Caco-2 (cell line): ENCODE measurements at regions of chr12 and their contacts with region 1.

Region 1: GRCh38 chr12:4276524-4277204 is 3.1 kb downstream of the CCND2 start:
- DNase-seq: peak; percentile 94 to 95
- H3K4me3 ChIP-seq: no peak overlapping the region
- H3K4me3 Mint-ChIP-seq: peak overlapping the region; percentile 98
- H3K27ac Mint-ChIP-seq: peak overlapping the region; percentile 94
- H3K4me1 ChIP-seq: peaks cover 46% of the 10 kb centered on the region
- H3K4me1 Mint-ChIP-seq: peaks cover 52% of the 10 kb centered on the region
- H3K27me3 ChIP-seq: peaks cover 13% of the 10 kb centered on the region
- H3K27me3 Mint-ChIP-seq: peaks cover 24% of the 10 kb centered on the region
- CTCF ChIP-seq: peak; percentile 97 to 98

Region 2: DNA sequence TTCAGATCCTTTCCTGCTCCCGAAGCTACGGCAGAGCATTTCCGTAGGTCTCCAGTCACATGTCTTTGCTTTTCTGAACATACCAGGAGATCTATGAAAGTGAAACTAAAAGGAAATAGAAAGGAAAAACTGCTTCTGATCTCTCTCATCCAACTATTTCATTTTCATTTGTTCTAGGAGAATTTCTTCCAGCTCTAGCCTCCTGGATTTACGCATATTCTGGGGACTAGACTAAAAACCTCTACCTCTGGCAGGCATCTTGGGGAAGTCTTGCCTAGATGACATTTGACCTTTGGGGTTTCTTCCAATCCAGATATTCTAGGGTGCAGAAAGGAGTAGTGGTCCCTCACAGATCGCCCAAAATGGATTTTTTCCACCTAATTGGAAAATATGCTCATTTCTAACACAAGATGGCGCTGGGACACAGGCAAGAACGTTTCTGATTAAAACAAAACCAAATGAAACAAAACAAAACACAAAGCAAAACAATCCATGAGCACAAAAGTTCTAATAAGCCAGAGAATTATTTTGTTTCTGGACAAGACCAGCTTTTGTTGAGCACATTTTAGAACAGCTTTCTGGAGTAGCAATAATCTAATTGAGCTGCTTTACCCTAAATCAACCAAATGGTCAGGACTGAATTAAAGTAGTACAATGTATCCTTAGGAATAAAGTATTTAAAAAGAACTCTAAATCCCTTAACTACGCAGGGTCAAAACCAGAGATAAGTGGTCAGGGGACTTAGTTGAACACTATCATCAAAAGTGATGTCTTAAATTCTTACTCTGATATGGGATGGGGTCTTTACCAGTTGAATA is 391.2 kb before region 1 on chr12:
- CTCF ChIA-PET with region 1: interaction called, 93 read pairs
- POLR2A ChIA-PET with region 1: interaction called, 5 read pairs
- intact Hi-C with region 1: loop called (anchors 1 kb)
- DNase-seq: peak in 1 of 2 experiments; percentile 67
- H3K4me3 ChIP-seq: no peak overlapping the region
- H3K4me3 Mint-ChIP-seq: no peak overlapping the region
- H3K27ac Mint-ChIP-seq: no peak overlapping the region
- H3K4me1 ChIP-seq: 0 out of 2 replicates have a peak, but pooled peaks cover 3% of the 10 kb centered on the region
- H3K4me1 Mint-ChIP-seq: peaks cover 14% of the 10 kb centered on the region
- H3K27me3 ChIP-seq: no peaks in the 10 kb centered on the region
- H3K27me3 Mint-ChIP-seq: peaks cover 7% of the 10 kb centered on the region
- CTCF ChIP-seq: peak; percentile 90 to 98

Region 3: GRCh38 chr12:3935078-3935477 is 341.6 kb before region 1 on chr12:
- CTCF ChIA-PET with region 1: interaction called, 16 read pairs
- POLR2A ChIA-PET with region 1: no interaction called
- intact Hi-C with region 1: no loop called
- DNase-seq: no peak
- H3K4me3 ChIP-seq: no peak overlapping the region
- H3K4me3 Mint-ChIP-seq: no peak overlapping the region
- H3K27ac Mint-ChIP-seq: no peak overlapping the region
- H3K4me1 ChIP-seq: no peaks in the 10 kb centered on the region
- H3K4me1 Mint-ChIP-seq: no peaks in the 10 kb centered on the region
- H3K27me3 ChIP-seq: no peaks in the 10 kb centered on the region
- H3K27me3 Mint-ChIP-seq: peaks cover 5% of the 10 kb centered on the region
- CTCF ChIP-seq: no peak

Region 4: GRCh38 chr12:3998968-3999826 is 277.5 kb before region 1 on chr12:
- CTCF ChIA-PET with region 1: interaction called, 32 read pairs
- POLR2A ChIA-PET with region 1: interaction called, 6 read pairs
- intact Hi-C with region 1: loop called (anchors 1 kb)
- DNase-seq: peak; percentile 94
- H3K4me3 ChIP-seq: no peak overlapping the region
- H3K4me3 Mint-ChIP-seq: peak overlapping the region; percentile 19
- H3K27ac Mint-ChIP-seq: peak overlapping the region; percentile 98
- H3K4me1 ChIP-seq: peaks cover 31% of the 10 kb centered on the region
- H3K4me1 Mint-ChIP-seq: peaks cover 51% of the 10 kb centered on the region
- H3K27me3 ChIP-seq: no peaks in the 10 kb centered on the region
- H3K27me3 Mint-ChIP-seq: no peaks in the 10 kb centered on the region
- CTCF ChIP-seq: no peak

Region 5: DNA sequence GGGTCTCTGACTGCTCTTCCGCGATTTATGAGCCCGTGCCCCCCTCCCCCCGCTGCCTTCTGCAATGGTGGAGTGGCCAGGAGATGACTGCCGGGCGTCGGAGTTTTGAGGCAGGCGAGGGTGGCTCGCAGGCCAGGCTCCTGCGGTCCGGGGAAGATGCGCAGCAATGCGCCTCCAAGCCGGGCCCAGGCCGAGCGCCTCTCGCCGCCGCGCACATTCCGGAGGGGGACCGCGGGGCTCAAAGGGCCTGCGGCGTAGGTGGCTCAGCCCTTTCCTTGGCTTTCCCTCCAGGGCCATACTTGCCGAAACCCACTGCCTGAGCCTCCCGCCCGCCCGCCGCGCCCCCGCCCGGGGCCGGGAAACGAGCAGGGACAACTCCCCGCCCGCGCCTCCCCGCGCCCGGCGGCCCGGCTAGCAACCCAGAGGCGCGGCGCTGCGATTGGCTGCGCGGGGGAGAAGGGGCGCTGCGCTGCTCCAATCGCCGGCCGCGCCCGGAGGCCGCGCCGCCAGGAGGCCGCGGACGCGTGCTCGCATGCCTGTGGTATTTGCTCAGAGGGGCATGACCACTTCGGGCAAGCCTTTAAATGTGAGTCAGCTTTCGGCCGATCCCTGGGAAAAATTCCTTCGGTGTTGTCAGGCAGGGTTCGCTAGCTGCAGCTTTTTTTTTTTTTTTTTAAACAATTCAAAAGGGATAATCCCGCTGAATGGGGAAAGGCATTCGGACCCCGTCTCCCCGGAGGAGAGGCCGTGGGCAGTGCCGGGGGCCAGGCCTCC is 245.5 kb before region 1 on chr12:
- CTCF ChIA-PET with region 1: interaction called, 50 read pairs
- POLR2A ChIA-PET with region 1: no interaction called
- intact Hi-C with region 1: no loop called
- DNase-seq: peak; percentile 99
- H3K4me3 ChIP-seq: peak overlapping the region; percentile 44
- H3K4me3 Mint-ChIP-seq: peak overlapping the region; percentile 67
- H3K27ac Mint-ChIP-seq: peak overlapping the region; percentile 96
- H3K4me1 ChIP-seq: peaks cover 49% of the 10 kb centered on the region
- H3K4me1 Mint-ChIP-seq: peaks cover 57% of the 10 kb centered on the region
- H3K27me3 ChIP-seq: no peaks in the 10 kb centered on the region
- H3K27me3 Mint-ChIP-seq: no peaks in the 10 kb centered on the region
- CTCF ChIP-seq: no peak

Region 6: GRCh38 chr12:4107436-4107878 is 169.2 kb before region 1 on chr12:
- CTCF ChIA-PET with region 1: interaction called, 47 read pairs
- POLR2A ChIA-PET with region 1: interaction called, 4 read pairs
- intact Hi-C with region 1: loop called (anchors 1 kb)
- DNase-seq: peak; percentile 68 to 70
- H3K4me3 ChIP-seq: no peak overlapping the region
- H3K4me3 Mint-ChIP-seq: no peak overlapping the region
- H3K27ac Mint-ChIP-seq: no peak overlapping the region
- H3K4me1 ChIP-seq: no peaks in the 10 kb centered on the region
- H3K4me1 Mint-ChIP-seq: peaks cover 6% of the 10 kb centered on the region
- H3K27me3 ChIP-seq: no peaks in the 10 kb centered on the region
- H3K27me3 Mint-ChIP-seq: peaks cover 16% of the 10 kb centered on the region
- CTCF ChIP-seq: peak; percentile 75 to 82

Region 7: GRCh38 chr12:4164559-4165558 is 111.8 kb before region 1 on chr12:
- CTCF ChIA-PET with region 1: interaction called, 14 read pairs
- POLR2A ChIA-PET with region 1: interaction called, 7 read pairs
- intact Hi-C with region 1: no loop called
- DNase-seq: peak; percentile 51 to 62
- H3K4me3 ChIP-seq: peak overlapping the region; percentile 41
- H3K4me3 Mint-ChIP-seq: peak overlapping the region; percentile 68
- H3K27ac Mint-ChIP-seq: no peak overlapping the region
- H3K4me1 ChIP-seq: peaks cover 5% of the 10 kb centered on the region; the same call in 1 of the 2 replicates
- H3K4me1 Mint-ChIP-seq: no peaks in the 10 kb centered on the region
- H3K27me3 ChIP-seq: no peaks in the 10 kb centered on the region; the same call in 1 of the 2 replicates
- H3K27me3 Mint-ChIP-seq: peaks cover 15% of the 10 kb centered on the region
- CTCF ChIP-seq: no peak

Region 8: DNA sequence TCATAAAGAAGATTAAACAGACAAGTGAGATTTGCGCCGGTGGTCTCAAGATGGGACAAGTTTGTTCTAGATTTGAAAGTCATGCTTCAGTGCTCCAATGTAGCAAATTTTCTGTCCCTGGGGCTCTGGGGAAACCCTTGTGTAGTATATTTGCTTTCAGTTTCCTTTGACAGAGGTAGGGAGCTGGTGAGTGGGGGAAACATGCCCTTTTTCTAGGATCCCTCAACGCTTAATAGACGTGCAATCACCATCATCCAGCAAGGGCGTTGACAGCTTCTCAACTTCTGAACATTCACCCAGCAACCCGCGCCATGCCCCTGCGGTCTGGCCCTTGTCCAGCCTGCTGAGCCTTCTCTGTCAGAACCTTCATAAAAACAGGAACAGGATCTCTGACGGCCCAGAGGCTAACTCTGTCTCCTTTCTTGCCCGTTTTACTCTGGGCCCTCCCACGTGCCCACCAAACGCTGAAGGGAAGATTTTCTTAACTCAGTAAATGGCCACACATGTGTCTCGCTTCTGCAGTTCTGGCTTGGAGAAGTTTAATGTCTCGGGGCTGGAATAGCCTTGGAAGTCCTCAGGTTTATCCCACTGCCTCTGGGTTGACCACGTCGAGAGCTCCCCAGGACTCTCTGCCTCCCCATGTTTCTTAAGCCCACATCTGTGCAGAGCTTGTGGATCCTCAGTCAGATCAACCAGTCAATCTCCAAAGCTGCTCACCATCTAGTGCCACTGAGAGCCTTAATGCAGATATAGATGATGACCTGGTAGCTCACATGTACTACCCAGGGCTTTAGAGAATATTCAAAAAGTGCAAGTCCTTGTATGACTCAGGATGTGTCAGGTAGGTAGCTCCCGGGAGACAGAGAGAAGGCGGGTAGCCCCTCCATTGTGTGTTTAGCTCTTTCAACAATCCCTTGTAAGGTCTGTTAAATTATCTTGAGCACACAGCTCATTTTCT is 61.2 kb before region 1 on chr12:
- CTCF ChIA-PET with region 1: no interaction called
- POLR2A ChIA-PET with region 1: no interaction called
- intact Hi-C with region 1: no loop called
- DNase-seq: no peak
- H3K4me3 ChIP-seq: no peak overlapping the region
- H3K4me3 Mint-ChIP-seq: no peak overlapping the region
- H3K27ac Mint-ChIP-seq: no peak overlapping the region
- H3K4me1 ChIP-seq: no peaks in the 10 kb centered on the region
- H3K4me1 Mint-ChIP-seq: no peaks in the 10 kb centered on the region
- H3K27me3 ChIP-seq: peaks cover 2% of the 10 kb centered on the region; the same call in 1 of the 2 replicates
- H3K27me3 Mint-ChIP-seq: peaks cover 34% of the 10 kb centered on the region
- CTCF ChIP-seq: no peak